CD8-positive, alpha-beta memory T cell (primary cell): ENCODE measurements at regions of chr16 and their contacts with region 1.

Region 1: DNA sequence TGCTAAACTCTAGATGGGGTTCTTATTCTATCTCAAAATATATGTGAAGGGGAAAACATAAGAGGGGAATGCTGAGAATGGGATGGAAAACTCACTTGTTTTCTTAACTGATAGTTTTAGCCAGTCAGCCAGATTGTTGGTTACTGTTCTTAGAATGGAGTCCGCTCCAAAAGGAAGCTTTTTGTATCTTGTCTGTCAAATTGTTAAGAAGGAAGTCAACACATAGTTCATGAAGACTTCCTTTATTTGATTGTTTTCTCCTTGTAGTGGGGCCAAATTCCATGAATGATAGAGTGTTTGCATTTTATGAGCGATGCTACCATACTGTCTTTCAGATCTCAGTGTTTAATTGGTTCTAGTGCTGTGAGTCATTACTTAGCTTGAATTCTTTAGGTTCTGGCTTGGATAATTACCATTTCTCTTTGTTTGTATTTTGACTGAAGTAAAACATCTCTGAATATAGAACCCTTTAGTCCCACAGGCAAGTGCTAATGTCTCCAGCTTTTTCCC is 98.3 kb upstream of the GOT2 start:
- DNase-seq: no peak
- H3K4me3 ChIP-seq: no peak overlapping the region
- H3K4me3 Mint-ChIP-seq: no peak overlapping the region
- H3K27ac ChIP-seq: no peak overlapping the region
- H3K27ac Mint-ChIP-seq: no peak overlapping the region
- H3K4me1 ChIP-seq: no peaks in the 10 kb centered on the region
- H3K4me1 Mint-ChIP-seq: peaks cover 4 to 7% (median 6%) of the 10 kb centered on the region in 3 donors
- H3K27me3 ChIP-seq: no peaks in the 10 kb centered on the region
- H3K27me3 Mint-ChIP-seq: peaks cover 7 to 42% of the 10 kb centered on the region in 2 donors

Region 2: DNA sequence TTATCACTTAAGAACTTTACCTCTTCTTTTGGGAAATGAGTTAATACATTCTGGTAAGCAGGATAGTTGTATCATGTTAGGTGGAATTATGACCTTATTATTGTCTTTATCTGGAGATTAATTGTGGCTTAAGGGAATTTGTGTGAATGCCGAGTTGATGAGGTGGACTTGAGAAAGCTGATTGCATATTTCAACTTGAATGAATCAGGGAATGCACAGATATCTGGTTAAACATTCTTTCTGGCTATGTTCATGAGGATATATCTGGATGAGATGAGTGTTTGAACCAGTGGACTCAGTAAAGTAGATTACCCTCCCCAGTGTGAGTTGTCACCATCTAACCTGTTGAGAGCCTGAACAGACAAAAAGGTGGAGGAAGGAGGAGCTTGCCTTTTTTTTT is 227.8 kb after region 1 on chr16:
- CTCF ChIA-PET with region 1: no interaction called
- POLR2A ChIA-PET with region 1: interaction called, 12 read pairs
- DNase-seq: no peak
- H3K4me3 ChIP-seq: no peak overlapping the region
- H3K4me3 Mint-ChIP-seq: no peak overlapping the region
- H3K27ac ChIP-seq: no peak overlapping the region
- H3K27ac Mint-ChIP-seq: no peak overlapping the region
- H3K4me1 ChIP-seq: no peaks in the 10 kb centered on the region
- H3K4me1 Mint-ChIP-seq: no peaks in the 10 kb centered on the region
- H3K27me3 ChIP-seq: no peaks in the 10 kb centered on the region
- H3K27me3 Mint-ChIP-seq: no peaks in the 10 kb centered on the region